ENCODE measurements at regions of chr9 and their contacts with region 1.

Region 1: GRCh38 chr9:36407122-36407723 is 7.2 kb upstream of the RNF38 start:
- DNase-seq: peak; percentile 63
- H3K27ac ChIP-seq: no peak overlapping the region
- CTCF ChIP-seq: peak; percentile 100

Region 2: DNA sequence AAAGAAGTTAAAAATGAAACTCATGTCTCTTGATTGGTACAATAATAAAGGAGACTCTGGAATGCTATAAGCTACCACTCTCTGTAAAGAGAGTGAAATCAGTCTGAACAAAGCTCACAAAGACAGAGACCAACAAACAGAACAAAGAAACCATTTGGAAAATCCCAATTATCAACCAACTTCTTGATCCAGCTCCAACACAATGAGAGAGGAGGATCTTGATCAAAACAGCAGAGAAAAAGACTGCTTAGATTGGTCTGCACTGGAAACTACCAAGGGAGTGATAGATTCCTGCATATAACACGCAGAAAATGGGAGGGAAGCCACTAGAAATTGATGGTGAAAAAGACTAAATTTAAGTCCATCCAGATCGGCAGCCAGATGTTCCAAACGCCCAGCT is 16.0 kb after region 1 on chr9:
- CTCF ChIA-PET with region 1: interaction called, 10 read pairs
- POLR2A ChIA-PET with region 1: no interaction called
- DNase-seq: no peak
- H3K27ac ChIP-seq: no peak overlapping the region
- CTCF ChIP-seq: no peak

Region 3: DNA sequence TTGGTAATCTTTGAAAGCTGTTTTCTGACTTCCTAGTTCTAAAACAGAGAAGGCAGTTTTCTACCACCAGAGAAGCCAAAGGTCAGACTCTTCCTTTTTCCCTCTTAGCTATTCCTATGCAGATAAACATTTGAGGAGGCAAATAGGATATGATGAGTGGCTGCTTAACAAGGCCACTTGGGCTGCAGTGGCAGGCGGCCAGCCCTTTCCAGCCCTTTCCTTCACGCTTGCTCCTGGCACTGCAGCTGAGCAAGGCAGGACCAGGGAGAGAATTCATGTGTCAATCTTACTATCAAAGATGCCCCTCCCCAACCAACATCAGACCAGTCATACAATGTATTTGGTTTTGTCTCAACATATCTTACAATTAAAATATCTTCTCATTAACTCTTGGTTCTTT is 29.7 kb after region 1 on chr9:
- CTCF ChIA-PET with region 1: interaction called, 11 read pairs
- POLR2A ChIA-PET with region 1: no interaction called
- DNase-seq: no peak
- H3K27ac ChIP-seq: no peak overlapping the region
- CTCF ChIP-seq: no peak

Region 4: DNA sequence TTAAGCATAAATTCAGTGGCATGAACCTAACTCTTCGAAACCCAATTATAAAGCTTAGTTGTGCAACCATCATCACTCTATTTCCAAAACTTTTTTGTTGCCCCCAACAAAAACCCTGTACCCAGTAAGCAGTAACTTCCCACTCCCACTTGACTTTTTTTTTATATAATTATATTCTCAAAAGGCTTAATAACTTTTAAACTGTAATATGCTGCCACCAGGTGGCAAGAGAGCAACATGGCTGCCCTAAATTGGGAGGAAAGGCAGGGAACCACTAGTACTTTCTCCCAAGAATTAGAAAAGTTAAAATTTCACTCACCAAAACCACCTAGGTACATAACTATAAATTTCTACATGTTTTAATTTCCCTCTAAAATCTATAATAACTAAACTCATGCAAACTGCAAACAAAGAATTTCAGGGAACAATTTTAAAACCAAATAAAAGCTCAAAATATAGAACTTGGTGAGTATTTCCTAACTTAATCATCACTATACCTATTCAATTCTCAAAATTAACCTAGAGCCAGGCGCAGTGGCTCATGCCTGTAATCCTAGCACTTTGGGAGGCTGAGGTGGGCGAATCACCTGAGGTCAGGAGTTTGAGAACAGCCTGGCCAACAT is 43.0 kb after region 1 on chr9:
- CTCF ChIA-PET with region 1: interaction called, 31 read pairs
- POLR2A ChIA-PET with region 1: no interaction called
- DNase-seq: peak; percentile 48
- H3K27ac ChIP-seq: 0 out of 2 replicates have a peak overlapping the region, but pooled peaks have one; percentile 20
- CTCF ChIP-seq: peak; percentile 91

Region 5: GRCh38 chr9:36492865-36493264 is 85.6 kb after region 1 on chr9:
- CTCF ChIA-PET with region 1: no interaction called
- POLR2A ChIA-PET with region 1: no interaction called
- DNase-seq: no peak
- H3K27ac ChIP-seq: no peak overlapping the region
- CTCF ChIP-seq: no peak

Region 6: DNA sequence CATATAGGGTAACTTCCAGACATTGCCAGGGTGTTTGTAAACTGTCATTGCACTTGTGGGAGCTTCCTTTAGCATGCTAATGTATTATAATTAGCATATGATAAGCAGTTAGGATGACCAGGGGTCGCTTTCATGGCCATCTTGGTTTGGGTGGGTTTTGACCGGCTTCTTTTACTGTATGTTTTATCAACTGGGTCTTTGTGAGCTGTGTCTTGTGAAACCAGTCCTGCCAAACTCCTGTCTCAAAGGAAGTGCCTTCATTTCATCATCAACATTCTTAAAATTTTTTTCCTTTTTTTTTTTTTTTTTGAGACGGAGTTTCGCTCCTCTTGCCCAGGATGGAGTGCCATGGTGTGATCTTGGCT is 153.6 kb after region 1 on chr9:
- CTCF ChIA-PET with region 1: interaction called, 32 read pairs
- POLR2A ChIA-PET with region 1: no interaction called
- DNase-seq: no peak
- H3K27ac ChIP-seq: no peak overlapping the region
- CTCF ChIP-seq: no peak

Region 7: DNA sequence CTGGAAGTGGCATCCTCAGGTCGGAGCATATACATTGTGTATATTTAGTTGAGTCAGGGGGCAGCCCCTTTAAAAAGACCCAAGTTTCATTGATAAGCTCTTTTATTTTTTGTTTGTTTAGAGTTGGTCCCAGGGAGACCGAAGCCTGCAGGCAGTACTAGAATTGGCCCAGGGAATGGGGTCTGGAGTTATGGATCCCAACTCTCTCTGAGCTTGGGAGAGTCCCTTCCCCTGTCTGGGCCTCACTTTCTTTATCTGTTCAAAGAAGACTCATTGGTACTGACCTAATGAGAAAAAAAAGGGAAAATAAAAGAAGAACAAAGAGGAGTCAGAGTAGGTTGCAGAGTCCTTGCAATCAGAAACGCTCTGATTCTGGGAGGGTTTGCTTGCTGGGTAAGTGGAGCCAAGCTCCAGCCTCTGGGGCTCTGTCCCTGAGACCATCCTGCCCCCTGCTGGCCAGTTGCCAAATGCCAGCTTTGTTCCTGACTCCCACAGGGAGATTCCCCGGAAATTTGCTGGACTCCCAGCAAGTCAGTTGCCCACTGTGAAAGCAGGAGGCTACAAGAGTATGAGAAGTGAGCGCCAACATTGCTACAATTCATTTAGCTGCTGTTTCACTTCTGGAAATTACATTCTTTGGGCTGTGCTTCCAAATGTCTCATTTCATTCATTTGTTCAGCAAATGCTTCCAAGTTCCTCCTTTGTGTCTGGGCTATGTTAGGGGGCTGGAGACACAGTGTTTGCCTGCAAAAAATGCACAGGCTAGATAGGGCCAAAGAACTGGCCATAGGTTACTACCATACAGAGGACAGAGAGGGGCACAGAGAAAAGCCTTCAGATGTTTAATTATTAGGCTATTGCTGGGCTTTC is 321.7 kb after region 1 on chr9:
- CTCF ChIA-PET with region 1: interaction called, 15 read pairs
- POLR2A ChIA-PET with region 1: no interaction called
- DNase-seq: peak; percentile 64
- H3K27ac ChIP-seq: no peak overlapping the region
- CTCF ChIP-seq: peak; percentile 64